Activated T-helper 1 cell treated with anti-CD3 and anti-CD28 coated beads, Interleukin-12 subunit alpha, Interleukin-12 subunit beta, Interleukin-2, Interleukin-4 antibody, amounts not matched to agents 30 ng/mL and 10 ng/mL and 1 ng/mL, durations not matched to agents 14 hours and 24 hours and 36 hours (primary cell): ENCODE measurements at regions of chr7 and their contacts with region 1.

Region 1: GRCh38 chr7:111083413-111083812 is 7.5 kb upstream of the LRRN3 start:
- DNase-seq: peak; percentile 74
- H3K4me3 Mint-ChIP-seq: peak overlapping the region; percentile 59
- H3K27ac Mint-ChIP-seq: peak overlapping the region; percentile 82
- H3K4me1 Mint-ChIP-seq: peaks cover 84% of the 10 kb centered on the region
- H3K27me3 Mint-ChIP-seq: no peaks in the 10 kb centered on the region

Region 2: DNA sequence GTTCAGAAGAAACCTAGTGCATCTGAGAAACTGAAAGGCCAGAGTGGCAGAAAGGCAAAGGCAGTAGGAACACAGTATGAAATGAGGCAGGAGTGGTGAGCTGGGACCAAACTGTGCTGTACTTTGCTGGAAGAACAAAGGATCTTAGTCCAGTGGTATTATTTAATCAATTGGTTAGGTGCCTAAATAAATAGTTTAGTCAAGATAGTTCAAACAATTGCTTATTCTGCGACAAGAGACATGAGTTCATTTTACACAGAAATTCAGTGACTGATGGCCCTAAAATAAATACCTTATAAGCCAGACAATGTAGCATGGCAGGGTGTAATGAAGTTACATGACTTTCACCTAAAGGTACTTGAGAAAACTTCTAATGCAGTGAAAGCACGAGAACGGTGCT is 174.3 kb before region 1 on chr7:
- intact Hi-C with region 1: loop called (anchors 5 kb)
- DNase-seq: no peak
- H3K4me3 Mint-ChIP-seq: no peak overlapping the region
- H3K27ac Mint-ChIP-seq: no peak overlapping the region
- H3K4me1 Mint-ChIP-seq: peaks cover 31% of the 10 kb centered on the region
- H3K27me3 Mint-ChIP-seq: no peaks in the 10 kb centered on the region

Region 3: GRCh38 chr7:111059833-111060232 is 23.6 kb before region 1 on chr7:
- intact Hi-C with region 1: no loop called
- DNase-seq: no peak
- H3K4me3 Mint-ChIP-seq: no peak overlapping the region
- H3K27ac Mint-ChIP-seq: no peak overlapping the region
- H3K4me1 Mint-ChIP-seq: peaks cover 19% of the 10 kb centered on the region
- H3K27me3 Mint-ChIP-seq: no peaks in the 10 kb centered on the region

Region 4: DNA sequence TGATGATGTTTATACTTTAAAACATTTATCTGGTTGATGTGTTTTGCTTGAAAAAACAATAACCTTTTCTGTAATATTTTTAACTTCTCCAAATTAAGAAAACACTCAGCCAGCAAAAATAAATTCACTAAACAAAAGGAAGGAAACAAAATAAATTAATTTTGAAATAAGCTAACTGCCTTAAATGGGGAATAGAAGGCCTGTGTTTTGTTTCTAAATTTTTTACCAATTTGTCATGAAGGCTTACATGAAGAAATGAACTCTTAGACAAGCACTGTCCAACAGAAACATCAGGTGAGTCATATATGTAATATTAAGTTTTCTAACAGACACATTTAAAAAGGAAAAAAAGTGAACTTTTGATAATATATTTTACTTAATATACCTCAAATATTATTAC is 76.0 kb after region 1 on chr7:
- intact Hi-C with region 1: no loop called
- DNase-seq: no peak
- H3K4me3 Mint-ChIP-seq: no peak overlapping the region
- H3K27ac Mint-ChIP-seq: no peak overlapping the region
- H3K4me1 Mint-ChIP-seq: no peaks in the 10 kb centered on the region
- H3K27me3 Mint-ChIP-seq: peaks cover 2% of the 10 kb centered on the region